Sigmoid colon (tissue), 7 donors: ENCODE measurements at regions of chr14 and their contacts with region 1.

Region 1: GRCh38 chr14:73223049-73223448 is 14.3 kb upstream of the PAPLN start:
- DNase-seq: no peak
- H3K4me3 ChIP-seq: no peak overlapping the region
- H3K27ac ChIP-seq: peak overlapping the region; percentile 37 to 67 (median 56)
- H3K4me1 ChIP-seq: peaks cover 0 to 24% (median 19%) of the 10 kb centered on the region in 4 donors
- H3K27me3 ChIP-seq: no peaks in the 10 kb centered on the region
- CTCF ChIP-seq: no peak
- EP300 ChIP-seq: no peak
- POLR2A ChIP-seq: no peak

Region 2: GRCh38 chr14:73458151-73458976 is 235.3 kb after region 1 on chr14 and contains the start of gene NUMB:
- intact Hi-C with region 1: loop called (anchors 5 kb)
- DNase-seq: peak; percentile 100
- H3K4me3 ChIP-seq: peak within 1 kb of the TSS; percentile 98 to 100 (median 100)
- H3K27ac ChIP-seq: peak within 1 kb of the TSS; percentile 97 to 98 (median 98)
- H3K4me1 ChIP-seq: peaks cover 0 to 77% (median 53%) of the 10 kb centered on the region in 4 donors
- H3K27me3 ChIP-seq: no peaks in the 10 kb centered on the region
- CTCF ChIP-seq: no peak
- EP300 ChIP-seq: no peak
- POLR2A ChIP-seq: peak; percentile 72 to 87
- total RNA-seq, gene NUMB: 37.6 to 80.3 (median 55.7) TPM

Region 3: DNA sequence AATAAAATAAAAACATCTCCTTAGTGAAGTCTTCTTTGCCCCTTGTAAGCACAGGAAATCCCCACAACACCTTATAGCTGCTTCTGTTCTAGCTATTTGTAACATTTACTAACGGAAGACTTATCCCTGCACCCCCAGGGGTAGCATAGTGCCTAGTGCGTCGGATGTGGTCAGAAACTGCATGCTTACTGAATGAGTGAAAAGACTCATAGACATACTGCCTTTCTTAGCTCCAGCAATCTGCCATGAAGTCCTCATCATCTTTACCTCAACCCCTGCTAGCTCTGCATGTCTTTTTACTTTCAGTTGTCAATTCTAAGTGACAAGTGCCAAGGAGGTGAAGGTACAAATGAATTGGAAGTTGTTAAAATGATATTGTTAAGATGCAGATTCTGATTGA is 280.6 kb after region 1 on chr14:
- intact Hi-C with region 1: no loop called
- DNase-seq: no peak
- H3K4me3 ChIP-seq: no peak overlapping the region
- H3K27ac ChIP-seq: no peak overlapping the region
- H3K4me1 ChIP-seq: no peaks in the 10 kb centered on the region
- H3K27me3 ChIP-seq: no peaks in the 10 kb centered on the region
- CTCF ChIP-seq: no peak
- EP300 ChIP-seq: no peak
- POLR2A ChIP-seq: no peak